CD4-positive, alpha-beta T cell (primary cell): ENCODE measurements at regions of chr3 and their contacts with region 1.

Region 1: GRCh38 chr3:157174649-157175498 is 14.9 kb upstream of the CCNL1 start:
- DNase-seq: peak; percentile 93 to 100 (median 98)
- ATAC-seq: peak; percentile 91
- H3K4me3 ChIP-seq: peak overlapping the region; percentile 65
- H3K4me3 Mint-ChIP-seq: peak overlapping the region; percentile 92
- H3K27ac ChIP-seq: peak overlapping the region; percentile 96 to 98
- H3K27ac Mint-ChIP-seq: peak overlapping the region; percentile 98
- H3K4me1 ChIP-seq: peaks cover 18% of the 10 kb centered on the region
- H3K4me1 Mint-ChIP-seq: peaks cover 31% of the 10 kb centered on the region
- H3K27me3 ChIP-seq: no peaks in the 10 kb centered on the region
- H3K27me3 Mint-ChIP-seq: no peaks in the 10 kb centered on the region
- CTCF ChIP-seq: no peak

Region 2: DNA sequence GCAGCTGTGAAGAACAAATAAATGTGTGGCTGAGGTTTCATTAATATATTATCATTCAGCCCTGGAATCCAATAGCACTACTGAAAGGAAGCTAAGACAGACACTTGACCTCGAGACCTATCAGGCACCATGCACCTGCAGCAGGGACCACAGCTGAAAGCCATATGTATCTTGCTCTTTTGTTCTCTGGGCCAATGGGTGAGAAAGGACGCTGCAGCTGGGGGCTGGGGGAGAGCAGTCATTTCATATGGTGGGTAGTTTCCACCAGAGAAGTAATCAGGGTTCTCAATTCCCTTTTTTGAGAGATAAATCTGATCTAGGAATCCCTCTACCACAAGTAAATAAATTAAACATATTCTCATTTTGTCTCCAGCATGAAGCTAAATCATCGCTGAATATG is 1655.8 kb before region 1 on chr3:
- CTCF ChIA-PET with region 1: no interaction called
- POLR2A ChIA-PET with region 1: no interaction called
- intact Hi-C with region 1: no loop called
- DNase-seq: peak in 1 of 14 experiments; percentile 1
- ATAC-seq: no peak
- H3K4me3 ChIP-seq: no peak overlapping the region
- H3K4me3 Mint-ChIP-seq: no peak overlapping the region
- H3K27ac ChIP-seq: no peak overlapping the region
- H3K27ac Mint-ChIP-seq: no peak overlapping the region
- H3K4me1 ChIP-seq: no peaks in the 10 kb centered on the region
- H3K4me1 Mint-ChIP-seq: no peaks in the 10 kb centered on the region
- H3K27me3 ChIP-seq: no peaks in the 10 kb centered on the region
- H3K27me3 Mint-ChIP-seq: no peaks in the 10 kb centered on the region
- CTCF ChIP-seq: no peak

Region 3: DNA sequence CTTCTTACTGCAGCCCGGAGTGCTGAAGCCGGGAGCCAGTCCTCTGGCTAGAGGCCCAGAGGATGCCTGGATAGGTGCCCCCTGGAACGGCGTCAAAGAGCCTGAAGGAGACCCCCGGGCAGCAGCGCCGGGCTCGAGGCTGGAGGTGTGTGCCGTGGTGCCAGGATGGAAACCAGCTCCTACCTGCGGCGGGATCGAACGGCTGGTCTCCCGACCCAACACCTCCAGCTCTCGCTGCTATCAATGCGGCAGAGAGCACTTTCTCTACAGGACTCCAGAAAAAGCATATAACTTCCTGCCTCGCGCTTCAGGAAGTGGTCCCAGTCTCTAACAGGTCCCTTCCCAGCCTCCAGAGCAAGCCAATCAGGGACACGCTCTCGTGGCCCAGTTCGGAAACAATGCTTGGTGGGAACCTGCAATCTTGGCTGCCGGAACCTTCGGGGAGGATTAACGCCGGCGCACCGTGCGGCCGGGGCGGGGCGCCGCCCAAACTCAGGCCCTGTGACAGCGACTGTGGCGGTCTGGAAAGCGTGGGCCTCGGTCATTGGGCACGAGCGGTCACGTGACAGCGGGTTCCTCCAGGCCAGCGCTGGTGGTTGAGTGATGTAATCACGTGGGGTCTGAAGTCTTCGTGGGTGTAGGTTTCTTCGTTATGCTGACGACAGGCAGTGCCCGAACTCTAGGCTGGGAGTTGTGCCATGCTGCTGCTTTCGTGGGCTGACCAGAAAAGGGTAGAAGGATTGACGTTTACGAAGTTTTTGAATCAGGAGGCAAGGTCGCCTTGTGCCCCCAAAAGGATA is 1320.5 kb before region 1 on chr3 and contains the start of gene SLC33A1:
- CTCF ChIA-PET with region 1: no interaction called
- POLR2A ChIA-PET with region 1: no interaction called
- intact Hi-C with region 1: loop called in 1 of 2 experiments (anchors 5 kb)
- DNase-seq: peak; percentile 96 to 100 (median 98)
- ATAC-seq: peak; percentile 90
- H3K4me3 ChIP-seq: peak within 1 kb of the TSS; percentile 93
- H3K4me3 Mint-ChIP-seq: peak within 1 kb of the TSS; percentile 97
- H3K27ac ChIP-seq: peak within 1 kb of the TSS; percentile 74 to 98
- H3K27ac Mint-ChIP-seq: peak within 1 kb of the TSS; percentile 98
- H3K4me1 ChIP-seq: peaks cover 52% of the 10 kb centered on the region
- H3K4me1 Mint-ChIP-seq: peaks cover 47% of the 10 kb centered on the region
- H3K27me3 ChIP-seq: no peaks in the 10 kb centered on the region
- H3K27me3 Mint-ChIP-seq: no peaks in the 10 kb centered on the region
- CTCF ChIP-seq: peak; percentile 2
- total RNA-seq, gene SLC33A1: 14.6 to 16.4 TPM

Region 4: GRCh38 chr3:156483961-156484787 is 690.7 kb before region 1 on chr3:
- CTCF ChIA-PET with region 1: no interaction called
- POLR2A ChIA-PET with region 1: interaction called, 13 read pairs
- intact Hi-C with region 1: no loop called
- DNase-seq: peak; percentile 10 to 86 (median 36)
- ATAC-seq: peak; percentile 84
- H3K4me3 ChIP-seq: peak overlapping the region; percentile 31
- H3K4me3 Mint-ChIP-seq: peak overlapping the region; percentile 20
- H3K27ac ChIP-seq: peak overlapping the region; percentile 66 to 75
- H3K27ac Mint-ChIP-seq: peak overlapping the region; percentile 80
- H3K4me1 ChIP-seq: peaks cover 16% of the 10 kb centered on the region
- H3K4me1 Mint-ChIP-seq: peaks cover 40% of the 10 kb centered on the region
- H3K27me3 ChIP-seq: no peaks in the 10 kb centered on the region
- H3K27me3 Mint-ChIP-seq: no peaks in the 10 kb centered on the region
- CTCF ChIP-seq: no peak

Region 5: DNA sequence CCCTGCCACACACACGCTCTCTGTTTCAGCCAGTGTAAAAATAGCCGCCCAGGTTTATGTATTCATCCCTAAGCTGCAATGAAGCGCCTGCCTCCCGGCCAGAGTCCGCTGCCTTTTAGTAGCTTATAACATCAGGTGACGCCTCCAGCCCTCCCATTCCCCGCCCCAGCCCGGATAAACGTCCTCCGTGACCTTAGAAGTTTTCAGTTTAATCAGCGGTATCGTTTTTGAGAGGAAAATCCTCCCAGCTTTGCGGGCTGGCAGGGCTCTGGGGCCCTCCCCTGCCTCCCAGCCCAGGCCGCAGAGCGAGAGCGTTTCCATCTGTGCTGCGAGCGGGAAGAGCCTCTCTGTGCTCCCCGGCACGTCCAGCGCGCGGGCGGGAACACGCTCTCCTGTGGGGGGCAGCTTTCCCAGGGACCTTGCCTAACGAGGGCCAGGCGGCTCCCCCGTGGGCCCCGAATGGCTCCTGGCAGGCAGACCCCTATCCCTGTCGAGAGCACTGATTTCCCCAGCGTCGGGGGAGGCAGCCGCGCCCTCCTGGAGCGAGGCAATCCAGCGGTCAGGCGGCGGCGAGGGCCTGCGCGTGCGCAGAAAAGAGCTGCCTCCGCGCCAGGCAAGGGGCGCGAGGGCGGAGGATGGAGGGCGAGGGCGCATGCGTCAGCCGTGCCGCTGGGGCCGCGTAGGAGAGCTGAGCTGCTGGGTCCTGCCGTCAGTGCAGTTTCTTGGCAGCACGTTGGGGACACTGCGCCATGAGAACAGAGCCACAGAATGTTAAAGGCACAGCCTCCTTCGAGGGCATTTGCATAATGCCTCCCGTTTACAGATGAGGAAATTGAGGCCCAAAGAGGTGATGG is 86.0 kb before region 1 on chr3:
- CTCF ChIA-PET with region 1: no interaction called
- POLR2A ChIA-PET with region 1: interaction called, 30 read pairs
- intact Hi-C with region 1: no loop called
- DNase-seq: peak; percentile 88 to 97 (median 92)
- ATAC-seq: peak; percentile 83
- H3K4me3 ChIP-seq: peak overlapping the region; percentile 71
- H3K4me3 Mint-ChIP-seq: peak overlapping the region; percentile 90
- H3K27ac ChIP-seq: peak overlapping the region; percentile 92 to 93
- H3K27ac Mint-ChIP-seq: peak overlapping the region; percentile 99
- H3K4me1 ChIP-seq: peaks cover 31% of the 10 kb centered on the region
- H3K4me1 Mint-ChIP-seq: peaks cover 20% of the 10 kb centered on the region
- H3K27me3 ChIP-seq: no peaks in the 10 kb centered on the region
- H3K27me3 Mint-ChIP-seq: no peaks in the 10 kb centered on the region
- CTCF ChIP-seq: peak; percentile 14

Region 6: GRCh38 chr3:157239082-157239704 is 64.3 kb after region 1 on chr3:
- CTCF ChIA-PET with region 1: no interaction called
- POLR2A ChIA-PET with region 1: interaction called, 5 read pairs
- intact Hi-C with region 1: loop called (anchors 1 to 2 kb)
- DNase-seq: peak; percentile 54 to 82 (median 61)
- ATAC-seq: peak; percentile 99
- H3K4me3 ChIP-seq: no peak overlapping the region
- H3K4me3 Mint-ChIP-seq: no peak overlapping the region
- H3K27ac ChIP-seq: no peak overlapping the region
- H3K27ac Mint-ChIP-seq: no peak overlapping the region
- H3K4me1 ChIP-seq: no peaks in the 10 kb centered on the region
- H3K4me1 Mint-ChIP-seq: no peaks in the 10 kb centered on the region
- H3K27me3 ChIP-seq: no peaks in the 10 kb centered on the region
- H3K27me3 Mint-ChIP-seq: no peaks in the 10 kb centered on the region
- CTCF ChIP-seq: peak; percentile 85